PC-3 (cell line): ENCODE measurements at regions of chr20 and their contacts with region 1.

Region 1: DNA sequence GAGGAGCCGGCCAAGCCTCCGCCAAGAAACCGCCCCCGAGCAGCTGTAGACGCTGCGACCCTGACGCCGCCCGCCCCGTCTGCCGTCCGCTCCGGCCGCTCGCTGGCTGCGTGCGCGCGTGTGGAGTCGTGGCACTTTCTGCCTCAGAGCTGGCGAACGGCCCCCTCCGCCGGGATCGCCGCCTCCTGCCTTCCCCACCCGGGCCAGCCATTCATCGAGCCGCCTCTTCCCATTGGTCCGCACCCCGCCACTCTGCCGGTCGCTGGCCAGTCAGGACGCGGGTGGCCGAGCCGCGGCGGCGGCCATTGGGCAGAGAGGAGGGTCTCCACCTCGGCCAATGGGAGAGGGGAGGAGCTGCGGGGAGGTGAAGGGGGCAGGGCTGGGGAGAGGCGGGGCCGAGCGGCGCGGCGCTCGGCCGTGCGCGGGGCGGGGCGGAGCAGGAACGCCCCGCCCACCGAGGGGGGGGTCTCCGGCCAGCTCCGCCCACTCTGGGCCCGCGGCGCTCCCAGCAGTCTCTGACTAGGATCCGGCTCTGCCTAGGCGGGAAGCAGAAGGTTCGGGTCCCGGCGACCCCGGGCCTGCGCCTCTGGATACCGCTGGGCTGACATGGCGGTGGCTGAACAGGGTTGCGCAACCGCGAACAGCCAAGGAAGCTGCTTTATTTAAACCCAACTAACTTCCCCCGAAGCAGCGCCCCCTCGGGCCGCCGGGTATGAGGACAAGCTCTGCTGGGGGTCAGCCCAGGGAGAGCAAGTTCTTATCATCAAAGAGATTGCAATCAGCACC is at the start of gene RRBP1:
- DNase-seq: peak; percentile 98
- ATAC-seq: peak; percentile 90
- H3K4me3 ChIP-seq: peak within 1 kb of the TSS; percentile 77
- H3K27ac ChIP-seq: peak within 1 kb of the TSS; percentile 26; the same call in 1 of the 2 replicates
- H3K4me1 ChIP-seq: peaks cover 19% of the 10 kb centered on the region
- H3K27me3 ChIP-seq: peaks cover 41% of the 10 kb centered on the region
- CTCF ChIP-seq: peak; percentile 88
- total RNA-seq, gene RRBP1: 176 and 241 TPM in 2 replicates

Region 2: GRCh38 chr20:17654649-17655285 is 27.5 kb before region 1 on chr20:
- CTCF ChIA-PET with region 1: interaction called, 14 read pairs
- POLR2A ChIA-PET with region 1: no interaction called
- intact Hi-C with region 1: no loop called
- DNase-seq: peak; percentile 51
- ATAC-seq: no peak
- H3K4me3 ChIP-seq: no peak overlapping the region
- H3K27ac ChIP-seq: 0 out of 2 replicates have a peak overlapping the region, but pooled peaks have one; percentile 4
- H3K4me1 ChIP-seq: peaks cover 26% of the 10 kb centered on the region
- H3K27me3 ChIP-seq: no peaks in the 10 kb centered on the region
- CTCF ChIP-seq: peak; percentile 95

Region 3: DNA sequence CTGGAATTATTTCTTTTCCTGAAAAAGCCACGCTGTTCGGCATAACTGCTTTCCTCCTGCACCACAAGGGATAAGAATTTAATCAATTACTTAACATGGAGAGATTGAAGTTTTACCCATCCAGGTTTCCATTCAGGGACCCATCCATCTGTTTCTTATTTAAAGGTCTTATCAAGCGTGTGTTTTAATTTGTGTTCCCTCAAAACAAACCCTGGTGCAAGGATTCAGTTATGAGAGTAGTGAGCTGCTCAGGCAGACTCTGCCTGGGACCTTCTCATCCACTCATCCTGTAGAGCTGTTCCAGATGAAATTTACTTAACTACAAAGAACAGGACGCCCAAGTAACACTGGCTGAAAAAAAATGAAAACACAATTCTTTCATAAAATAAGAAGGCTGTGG is 115.3 kb after region 1 on chr20:
- CTCF ChIA-PET with region 1: interaction called, 10 read pairs
- POLR2A ChIA-PET with region 1: no interaction called
- intact Hi-C with region 1: no loop called
- DNase-seq: no peak
- ATAC-seq: no peak
- H3K4me3 ChIP-seq: no peak overlapping the region
- H3K27ac ChIP-seq: no peak overlapping the region
- H3K4me1 ChIP-seq: peaks cover 27% of the 10 kb centered on the region
- H3K27me3 ChIP-seq: no peaks in the 10 kb centered on the region
- CTCF ChIP-seq: no peak

Region 4: GRCh38 chr20:17833036-17833674 is 150.9 kb after region 1 on chr20:
- CTCF ChIA-PET with region 1: no interaction called
- POLR2A ChIA-PET with region 1: no interaction called
- intact Hi-C with region 1: no loop called
- DNase-seq: peak; percentile 48
- ATAC-seq: peak; percentile 34; the same call in 1 of the 2 replicates
- H3K4me3 ChIP-seq: no peak overlapping the region
- H3K27ac ChIP-seq: peak overlapping the region; percentile 47
- H3K4me1 ChIP-seq: peaks cover 28% of the 10 kb centered on the region
- H3K27me3 ChIP-seq: no peaks in the 10 kb centered on the region
- CTCF ChIP-seq: no peak

Region 5: GRCh38 chr20:17856024-17856564 is 173.8 kb after region 1 on chr20:
- CTCF ChIA-PET with region 1: interaction called, 11 read pairs
- POLR2A ChIA-PET with region 1: interaction called, 3 read pairs
- intact Hi-C with region 1: no loop called
- DNase-seq: peak; percentile 57
- ATAC-seq: peak; percentile 96
- H3K4me3 ChIP-seq: no peak overlapping the region
- H3K27ac ChIP-seq: no peak overlapping the region
- H3K4me1 ChIP-seq: peaks cover 4% of the 10 kb centered on the region; the same call in 1 of the 2 replicates
- H3K27me3 ChIP-seq: no peaks in the 10 kb centered on the region
- CTCF ChIP-seq: no peak

Region 6: DNA sequence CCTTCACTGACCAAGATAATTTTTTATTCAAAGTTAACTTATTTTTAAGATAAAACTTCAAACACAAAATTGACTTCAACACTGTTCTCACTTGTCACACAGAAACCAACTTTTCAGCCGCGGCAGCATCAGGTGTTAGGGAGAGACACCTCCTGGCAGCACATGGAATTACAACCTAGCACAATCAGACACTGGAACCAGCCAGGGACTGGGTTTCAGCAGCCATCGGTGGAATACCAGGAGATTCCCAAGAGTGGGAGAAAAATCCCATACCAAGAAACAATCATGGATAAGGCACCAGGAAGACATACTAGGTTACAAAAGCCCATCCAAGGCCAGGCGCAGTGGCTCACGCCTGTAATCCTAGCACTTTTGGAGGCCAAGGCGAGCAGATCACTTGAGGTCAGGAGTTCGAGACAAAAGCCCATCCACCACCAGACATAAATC is 216.3 kb after region 1 on chr20:
- CTCF ChIA-PET with region 1: interaction called, 9 read pairs
- POLR2A ChIA-PET with region 1: interaction called, 3 read pairs
- intact Hi-C with region 1: loop called (anchors 1 kb)
- DNase-seq: peak; percentile 86
- ATAC-seq: peak; percentile 75
- H3K4me3 ChIP-seq: no peak overlapping the region
- H3K27ac ChIP-seq: no peak overlapping the region
- H3K4me1 ChIP-seq: no peaks in the 10 kb centered on the region
- H3K27me3 ChIP-seq: no peaks in the 10 kb centered on the region
- CTCF ChIP-seq: peak; percentile 98